Activated naive CD4-positive, alpha-beta T cell treated with anti-CD3 and anti-CD28 coated beads, Interleukin-2, amount 10 ng/mL, durations not matched to agents 7 days and 5 days (primary cell): ENCODE measurements at regions of chr10 and their contacts with region 1.

Region 1: DNA sequence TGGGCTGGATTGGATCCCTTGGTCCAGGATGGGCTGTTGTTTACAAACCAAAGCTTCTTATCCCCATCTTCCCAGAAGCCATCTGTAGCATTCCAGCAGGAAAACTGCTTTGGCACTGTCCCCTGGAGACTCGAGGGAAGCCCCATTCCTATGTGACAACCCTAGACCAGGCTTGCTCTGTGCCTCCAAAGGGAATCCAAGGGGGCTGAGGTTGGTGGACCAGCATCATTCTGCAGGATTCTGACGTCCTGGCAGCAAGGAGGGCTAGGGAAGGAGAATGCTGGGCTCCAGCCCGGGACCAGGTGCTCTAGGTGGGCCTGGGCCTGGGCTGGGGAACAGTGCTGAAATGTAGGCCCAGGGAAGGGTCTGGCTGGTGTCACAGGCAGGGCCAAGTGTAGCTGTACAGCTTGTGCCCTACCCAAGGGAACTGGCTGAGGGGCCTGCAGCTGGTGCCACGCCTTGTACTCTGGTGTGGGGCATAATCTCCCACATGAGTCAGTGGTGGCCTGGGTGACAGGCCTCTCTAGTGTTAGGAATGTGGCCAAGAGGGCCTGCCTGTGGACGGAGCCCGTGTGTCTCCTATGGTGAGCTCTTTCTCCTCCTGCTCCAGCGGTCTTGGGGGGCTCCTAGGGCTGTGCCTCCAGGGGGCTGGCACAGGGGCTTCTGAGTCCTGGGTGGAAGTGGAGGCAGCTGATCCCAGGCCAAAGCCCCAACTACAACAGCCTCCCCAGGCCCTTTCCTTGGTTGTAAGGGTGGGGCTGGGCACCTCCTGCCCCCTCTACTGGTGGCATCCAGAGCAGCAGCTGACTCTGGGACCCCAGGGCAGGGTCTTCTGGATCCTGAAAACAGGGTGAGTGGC is 25.2 kb downstream of the TRIM8 start:
- DNase-seq: no peak
- H3K4me3 Mint-ChIP-seq: no peak overlapping the region
- H3K27ac Mint-ChIP-seq: no peak overlapping the region
- H3K4me1 Mint-ChIP-seq: peaks cover 36% of the 10 kb centered on the region
- H3K27me3 Mint-ChIP-seq: no peaks in the 10 kb centered on the region

Region 2: DNA sequence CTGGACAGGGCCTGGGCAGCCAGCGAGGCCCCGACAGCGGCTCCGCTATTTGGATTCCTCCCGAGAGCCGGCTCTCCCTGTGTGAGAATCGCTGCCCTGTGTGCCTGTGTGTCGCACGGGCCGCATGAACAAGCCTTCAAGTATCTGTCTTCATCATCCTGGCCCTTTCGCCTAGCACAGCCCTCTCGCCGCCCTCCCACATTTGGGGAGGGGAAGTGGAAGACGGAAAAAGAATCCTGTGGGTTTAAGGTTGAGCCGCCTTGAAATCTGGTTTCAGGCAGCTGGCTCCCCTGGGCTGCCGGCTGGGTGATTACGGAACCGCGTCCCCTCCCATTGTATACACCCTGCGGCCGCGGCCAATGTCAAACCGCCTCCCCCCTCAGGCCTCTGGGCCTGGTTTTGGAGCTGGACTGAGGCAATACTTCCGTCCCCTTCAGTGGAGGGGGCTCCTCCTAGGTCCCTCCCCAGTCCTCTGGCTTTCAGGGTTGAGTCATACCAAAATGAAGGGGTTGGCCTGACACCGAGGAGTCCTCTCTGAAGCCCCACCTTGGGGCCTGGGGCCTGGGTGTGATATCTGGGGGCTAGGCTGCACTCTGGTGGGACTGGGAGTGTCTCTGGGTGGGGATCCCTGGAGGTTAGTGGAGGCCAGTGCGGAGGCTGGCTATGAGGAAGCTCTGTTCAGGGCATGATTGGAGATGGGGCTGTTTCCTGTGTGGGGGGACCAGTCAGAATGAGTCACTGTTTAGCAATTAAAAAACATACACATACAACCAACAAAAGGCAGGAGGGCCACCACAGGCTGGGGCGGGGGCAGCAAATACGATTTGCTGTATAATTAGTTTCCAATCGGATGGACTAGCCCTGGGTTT is 23.5 kb before region 1 on chr10:
- CTCF ChIA-PET with region 1: interaction called, 14 read pairs
- DNase-seq: peak; percentile 81
- H3K4me3 Mint-ChIP-seq: peak overlapping the region; percentile 92
- H3K27ac Mint-ChIP-seq: peak overlapping the region; percentile 96
- H3K4me1 Mint-ChIP-seq: peaks cover 55% of the 10 kb centered on the region
- H3K27me3 Mint-ChIP-seq: no peaks in the 10 kb centered on the region

Region 3: GRCh38 chr10:102652170-102652916 is 17.1 kb before region 1 on chr10:
- CTCF ChIA-PET with region 1: interaction called, 14 read pairs
- DNase-seq: no peak
- H3K4me3 Mint-ChIP-seq: peak overlapping the region; percentile 30
- H3K27ac Mint-ChIP-seq: peak overlapping the region; percentile 85
- H3K4me1 Mint-ChIP-seq: peaks cover 65% of the 10 kb centered on the region
- H3K27me3 Mint-ChIP-seq: no peaks in the 10 kb centered on the region

Region 4: GRCh38 chr10:103445767-103446567 is 776.5 kb after region 1 on chr10:
- CTCF ChIA-PET with region 1: no interaction called
- DNase-seq: no peak
- H3K4me3 Mint-ChIP-seq: no peak overlapping the region
- H3K27ac Mint-ChIP-seq: peak overlapping the region; percentile 64
- H3K4me1 Mint-ChIP-seq: peaks cover 50% of the 10 kb centered on the region
- H3K27me3 Mint-ChIP-seq: no peaks in the 10 kb centered on the region